ENCODE measurements at regions of chr12 and their contacts with region 1.

Region 1: DNA sequence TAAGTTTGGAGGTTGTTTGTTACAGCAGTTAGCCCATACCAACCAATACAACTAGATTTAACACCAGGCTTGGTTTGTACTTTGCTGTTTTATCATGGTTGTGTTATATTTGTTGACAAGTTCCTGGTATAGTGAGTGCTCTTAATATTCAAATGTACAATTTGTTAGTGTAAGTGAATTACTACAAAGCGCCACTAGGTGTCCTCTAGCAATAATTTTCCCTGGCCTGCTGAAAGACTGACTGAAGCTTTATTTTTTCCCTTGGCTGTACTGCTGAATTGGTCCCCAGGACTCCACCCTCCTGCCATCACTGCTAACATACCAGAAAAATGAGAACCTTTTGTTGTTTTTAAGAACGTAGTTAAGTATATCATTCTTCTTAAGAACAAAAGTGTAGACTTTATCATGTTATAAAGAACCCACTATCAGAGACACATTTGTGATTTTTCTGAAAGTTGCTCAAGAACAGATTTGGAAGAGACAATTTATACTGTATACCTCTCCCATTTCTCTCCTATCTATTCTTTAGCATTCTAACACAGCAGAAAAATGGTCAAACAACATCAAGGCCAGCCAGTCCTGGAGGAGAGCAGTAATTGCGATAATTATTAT is 75.3 kb upstream of the FAR2 start:
- DNase-seq: no peak
- H3K4me3 ChIP-seq: no peak overlapping the region
- H3K27ac ChIP-seq: no peak overlapping the region
- H3K4me1 ChIP-seq: no peaks in the 10 kb centered on the region
- H3K27me3 ChIP-seq: no peaks in the 10 kb centered on the region
- CTCF ChIP-seq: peak; percentile 30 to 73 (median 59)
- EP300 ChIP-seq: no peak
- POLR2A ChIP-seq: no peak

Region 2: GRCh38 chr12:29131539-29131938 is 57.8 kb after region 1 on chr12:
- intact Hi-C with region 1: no loop called
- DNase-seq: no peak
- H3K4me3 ChIP-seq: no peak overlapping the region
- H3K27ac ChIP-seq: no peak overlapping the region
- H3K4me1 ChIP-seq: no peaks in the 10 kb centered on the region
- H3K27me3 ChIP-seq: no peaks in the 10 kb centered on the region
- CTCF ChIP-seq: no peak
- EP300 ChIP-seq: no peak
- POLR2A ChIP-seq: no peak

Region 3: DNA sequence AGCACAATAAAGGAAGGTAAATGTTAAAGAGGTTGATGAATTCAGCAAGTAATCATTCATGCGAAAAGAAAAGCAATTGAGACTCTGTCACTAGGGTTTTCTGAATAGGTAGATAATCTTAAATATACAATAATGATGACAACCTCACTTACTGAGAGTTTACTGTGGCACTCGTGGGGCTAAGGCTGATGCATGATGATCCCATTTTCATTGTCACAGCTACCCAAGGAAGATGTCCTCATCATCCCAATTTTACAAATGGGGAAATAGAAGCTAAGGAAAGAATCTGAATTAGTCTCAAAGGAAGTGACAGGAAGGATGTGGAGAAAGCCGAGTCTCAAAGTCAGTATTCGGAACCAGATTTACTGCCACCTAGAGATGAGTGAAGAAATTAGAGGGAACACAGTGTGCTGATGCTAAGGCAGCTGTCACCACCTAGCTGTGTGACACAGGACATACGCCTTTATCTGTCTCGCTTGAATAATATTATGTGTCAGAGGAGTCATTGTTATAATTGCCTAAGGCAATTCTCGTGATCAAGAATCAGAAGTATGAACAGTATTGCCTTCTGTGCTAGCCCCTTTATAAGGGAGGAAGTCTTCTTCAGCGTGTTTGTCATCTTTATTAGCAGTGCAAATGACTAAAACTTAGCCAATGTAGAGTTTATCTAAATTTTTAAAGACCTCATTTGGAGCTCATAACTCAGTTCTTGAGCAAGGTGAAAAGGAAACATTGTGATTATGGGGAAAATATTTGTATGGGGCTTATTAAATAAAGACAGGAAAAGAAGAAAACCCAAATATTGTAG is 244.0 kb after region 1 on chr12:
- intact Hi-C with region 1: loop called (anchors 5 kb)
- DNase-seq: no peak
- H3K4me3 ChIP-seq: no peak overlapping the region
- H3K27ac ChIP-seq: no peak overlapping the region
- H3K4me1 ChIP-seq: peaks cover 0 to 11% (median 3%) of the 10 kb centered on the region in 4 donors
- H3K27me3 ChIP-seq: no peaks in the 10 kb centered on the region
- CTCF ChIP-seq: peak; percentile 43 to 66 (median 48)
- EP300 ChIP-seq: no peak
- POLR2A ChIP-seq: no peak

Region 4: GRCh38 chr12:30806989-30807694 is 1733.4 kb after region 1 on chr12:
- intact Hi-C with region 1: loop called (anchors 10 kb)
- DNase-seq: no peak
- H3K4me3 ChIP-seq: no peak overlapping the region
- H3K27ac ChIP-seq: no peak overlapping the region
- H3K4me1 ChIP-seq: peaks cover 0 to 4% (median 2%) of the 10 kb centered on the region in 4 donors
- H3K27me3 ChIP-seq: peaks cover 0 to 4% (median 0%) of the 10 kb centered on the region in 3 donors
- CTCF ChIP-seq: peak; percentile 33 to 69 (median 60)
- EP300 ChIP-seq: no peak
- POLR2A ChIP-seq: no peak

Measured in sigmoid colon (tissue), 7 donors.